Activated CD4-positive, alpha-beta memory T cell treated with anti-CD3 and anti-CD28 coated beads for 36 hours (primary cell): ENCODE measurements at regions of chr14 and their contacts with region 1.

Region 1: GRCh38 chr14:56422703-56423213 is 156.8 kb upstream of the TMEM260 start:
- DNase-seq: no peak
- H3K4me3 Mint-ChIP-seq: no peak overlapping the region
- H3K27ac Mint-ChIP-seq: no peak overlapping the region
- H3K4me1 Mint-ChIP-seq: no peaks in the 10 kb centered on the region
- H3K27me3 Mint-ChIP-seq: peaks cover 3% of the 10 kb centered on the region

Region 2: GRCh38 chr14:55707365-55707804 is 715.4 kb before region 1 on chr14:
- CTCF ChIA-PET with region 1: no interaction called
- POLR2A ChIA-PET with region 1: no interaction called
- intact Hi-C with region 1: loop called (anchors 2 kb)
- DNase-seq: no peak
- H3K4me3 Mint-ChIP-seq: no peak overlapping the region
- H3K27ac Mint-ChIP-seq: no peak overlapping the region
- H3K4me1 Mint-ChIP-seq: no peaks in the 10 kb centered on the region
- H3K27me3 Mint-ChIP-seq: no peaks in the 10 kb centered on the region

Region 3: DNA sequence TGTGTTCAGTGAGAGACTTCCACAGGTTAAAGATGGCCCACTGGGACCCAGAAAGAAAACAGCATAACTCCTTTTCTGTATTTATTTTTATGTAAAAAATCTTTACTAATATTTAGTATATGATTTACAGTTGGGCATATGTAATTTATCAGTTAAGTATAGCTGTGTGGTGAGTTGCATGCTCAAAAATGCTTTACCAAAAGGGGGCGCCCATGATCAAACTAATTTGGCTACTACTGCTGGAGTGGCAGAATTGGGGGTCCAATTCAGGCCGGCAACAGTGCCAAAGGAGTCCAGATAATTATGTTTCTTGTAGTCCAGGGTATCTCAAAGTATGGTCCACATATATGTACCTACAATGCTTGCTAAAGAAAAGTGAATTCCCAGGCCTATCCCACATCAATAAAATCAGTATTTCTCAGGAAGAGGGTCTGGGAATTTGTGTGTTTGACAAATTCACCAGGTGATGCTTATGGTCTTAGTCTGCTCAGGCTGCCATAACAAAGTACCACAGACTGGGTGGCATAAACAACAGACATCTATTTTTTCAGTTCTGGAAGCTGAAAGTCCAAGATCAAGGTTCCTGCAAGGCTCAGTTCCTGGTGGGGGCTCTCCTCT is 690.8 kb before region 1 on chr14:
- CTCF ChIA-PET with region 1: interaction called, 21 read pairs
- POLR2A ChIA-PET with region 1: no interaction called
- intact Hi-C with region 1: loop called (anchors 10 kb)
- DNase-seq: peak; percentile 59
- H3K4me3 Mint-ChIP-seq: no peak overlapping the region
- H3K27ac Mint-ChIP-seq: no peak overlapping the region
- H3K4me1 Mint-ChIP-seq: no peaks in the 10 kb centered on the region
- H3K27me3 Mint-ChIP-seq: no peaks in the 10 kb centered on the region

Region 4: GRCh38 chr14:56224691-56225681 is 197.8 kb before region 1 on chr14:
- CTCF ChIA-PET with region 1: no interaction called
- POLR2A ChIA-PET with region 1: no interaction called
- intact Hi-C with region 1: no loop called
- DNase-seq: no peak
- H3K4me3 Mint-ChIP-seq: no peak overlapping the region
- H3K27ac Mint-ChIP-seq: no peak overlapping the region
- H3K4me1 Mint-ChIP-seq: no peaks in the 10 kb centered on the region
- H3K27me3 Mint-ChIP-seq: no peaks in the 10 kb centered on the region